Left ventricle myocardium superior (tissue), 1 donor: ENCODE measurements at regions of chr15 and their contacts with region 1.

Region 1: DNA sequence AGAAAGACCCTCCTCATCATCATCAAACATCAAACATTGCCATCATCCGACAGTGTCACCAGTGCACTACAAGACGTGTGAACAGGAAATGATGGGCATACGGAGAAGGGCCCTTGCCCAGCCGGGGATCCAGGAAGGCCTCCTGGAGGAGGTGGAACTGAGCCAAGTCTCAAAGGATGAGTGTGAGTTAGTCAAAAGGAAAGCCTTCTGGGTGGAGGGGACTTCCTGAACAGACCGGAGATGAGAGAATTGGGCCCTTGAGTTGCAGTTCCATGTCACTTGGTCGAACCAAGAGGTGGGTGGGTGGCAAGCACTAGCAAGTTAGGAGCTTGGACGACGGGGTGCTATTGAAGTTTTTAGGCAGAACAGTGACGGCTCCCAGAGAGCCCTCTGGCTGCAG is 8.5 kb downstream of the SEMA4B start:
- DNase-seq: peak; percentile 3
- ATAC-seq: no peak

Region 2: GRCh38 chr15:90154861-90155626 is 54.5 kb before region 1 on chr15:
- intact Hi-C with region 1: loop called (anchors 5 kb)
- DNase-seq: no peak
- ATAC-seq: no peak